ENCODE measurements at regions of chr18 and their contacts with region 1.

Region 1: DNA sequence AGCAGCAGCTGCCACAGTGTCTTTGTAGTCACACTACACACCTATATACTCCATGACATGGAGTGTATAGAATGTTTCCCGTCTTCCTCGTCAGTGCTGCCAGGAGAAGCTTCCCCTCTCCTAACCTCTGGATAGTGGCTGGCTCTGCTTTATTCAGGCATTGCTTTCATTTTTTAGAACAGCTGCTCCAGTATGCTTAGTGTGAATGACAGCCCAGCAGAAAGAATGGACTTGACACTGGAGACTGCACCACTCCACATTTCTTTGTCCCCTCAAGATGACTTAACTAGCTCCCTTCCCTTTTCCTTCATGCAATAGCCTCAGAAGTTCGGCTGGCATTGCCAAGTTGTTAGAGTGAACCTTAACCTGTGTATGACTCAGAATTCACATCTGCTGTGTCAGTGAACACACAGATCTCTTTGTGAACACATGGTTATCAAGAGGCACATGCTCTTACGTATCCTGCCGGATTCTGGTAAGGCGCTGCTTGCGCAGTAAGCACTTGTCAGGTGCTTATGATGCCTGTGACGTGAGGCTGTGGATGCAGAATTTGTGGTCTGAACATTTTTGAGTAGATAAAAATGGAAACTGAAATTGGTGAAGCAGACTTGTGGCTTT is 73.9 kb downstream of the NEDD4L start:
- DNase-seq: no peak
- H3K4me3 Mint-ChIP-seq: no peak overlapping the region
- H3K27ac Mint-ChIP-seq: no peak overlapping the region
- H3K4me1 Mint-ChIP-seq: peaks cover 10% of the 10 kb centered on the region
- H3K27me3 Mint-ChIP-seq: peaks cover 5% of the 10 kb centered on the region

Region 2: DNA sequence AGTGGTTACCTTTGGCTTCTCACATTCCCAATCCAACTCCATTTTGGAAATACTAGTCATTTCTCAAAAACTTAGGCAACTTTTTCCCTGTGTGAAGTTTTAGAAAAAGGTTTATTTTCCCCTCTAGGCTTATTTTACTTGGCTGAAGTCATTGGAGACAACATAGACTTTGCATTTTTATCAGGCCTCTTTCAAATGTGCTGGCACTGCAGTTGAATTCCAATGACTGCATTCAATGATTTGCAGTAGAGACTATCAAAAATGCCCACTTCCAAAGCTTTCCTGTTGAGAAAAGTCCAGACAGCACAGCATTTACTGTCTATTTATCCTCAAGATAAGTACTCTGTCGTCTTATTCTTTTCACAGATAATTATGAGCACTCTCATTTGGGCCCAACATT is 612.7 kb before region 1 on chr18:
- intact Hi-C with region 1: no loop called
- DNase-seq: no peak
- H3K4me3 Mint-ChIP-seq: no peak overlapping the region
- H3K27ac Mint-ChIP-seq: no peak overlapping the region
- H3K4me1 Mint-ChIP-seq: no peaks in the 10 kb centered on the region
- H3K27me3 Mint-ChIP-seq: peaks cover 6% of the 10 kb centered on the region

Region 3: DNA sequence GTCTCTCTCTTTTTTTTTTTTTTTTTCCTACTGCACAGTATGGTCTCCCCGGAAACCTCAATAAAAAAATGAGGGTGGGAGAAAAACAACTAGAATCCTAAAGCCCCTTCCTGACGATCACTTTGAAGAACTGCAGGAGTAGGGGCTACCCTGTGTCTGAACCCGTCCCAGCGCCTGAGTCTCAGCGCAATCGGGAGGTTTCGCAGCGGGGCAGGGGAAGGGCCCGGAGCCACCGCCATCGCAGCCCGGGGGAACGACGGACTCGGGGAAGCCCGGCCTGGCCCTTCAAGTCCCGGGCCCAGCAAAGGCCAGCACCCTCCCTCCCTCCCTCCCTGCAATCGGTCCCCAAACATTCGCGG is 496.7 kb before region 1 on chr18:
- intact Hi-C with region 1: loop called (anchors 1 kb)
- DNase-seq: no peak
- H3K4me3 Mint-ChIP-seq: peak overlapping the region; percentile 85
- H3K27ac Mint-ChIP-seq: peak overlapping the region; percentile 87
- H3K4me1 Mint-ChIP-seq: peaks cover 9% of the 10 kb centered on the region
- H3K27me3 Mint-ChIP-seq: no peaks in the 10 kb centered on the region

Region 4: DNA sequence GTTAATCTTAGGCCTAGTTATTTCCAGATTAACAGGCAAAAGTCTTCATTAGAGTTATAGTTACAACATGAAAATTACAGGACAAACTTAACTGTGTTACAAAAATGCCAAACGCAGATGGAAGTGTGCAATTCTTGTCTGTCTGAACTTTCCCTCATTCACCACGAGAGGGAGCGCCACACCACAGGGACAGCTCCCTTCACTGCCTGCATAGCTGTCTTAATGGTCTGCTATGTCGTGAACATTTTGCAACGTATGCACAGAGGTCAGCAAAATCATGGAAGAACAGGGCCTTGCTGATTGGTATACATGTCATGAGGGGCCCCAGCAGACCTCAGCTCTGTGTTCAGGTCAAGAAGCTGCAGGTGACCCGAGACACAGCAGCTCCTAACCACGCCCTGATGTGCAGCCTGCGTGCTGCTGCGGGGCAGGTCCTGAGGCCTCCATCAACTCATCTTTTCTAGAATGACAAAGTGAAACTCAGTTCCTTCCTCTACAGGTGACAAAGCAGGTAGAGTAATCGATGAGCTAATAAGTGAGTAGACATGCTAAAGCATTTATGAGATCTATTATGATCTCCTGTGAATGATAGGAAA is 236.0 kb before region 1 on chr18:
- intact Hi-C with region 1: loop called (anchors 1 kb)
- DNase-seq: peak; percentile 13
- H3K4me3 Mint-ChIP-seq: no peak overlapping the region
- H3K27ac Mint-ChIP-seq: no peak overlapping the region
- H3K4me1 Mint-ChIP-seq: no peaks in the 10 kb centered on the region
- H3K27me3 Mint-ChIP-seq: peaks cover 3% of the 10 kb centered on the region

Region 5: DNA sequence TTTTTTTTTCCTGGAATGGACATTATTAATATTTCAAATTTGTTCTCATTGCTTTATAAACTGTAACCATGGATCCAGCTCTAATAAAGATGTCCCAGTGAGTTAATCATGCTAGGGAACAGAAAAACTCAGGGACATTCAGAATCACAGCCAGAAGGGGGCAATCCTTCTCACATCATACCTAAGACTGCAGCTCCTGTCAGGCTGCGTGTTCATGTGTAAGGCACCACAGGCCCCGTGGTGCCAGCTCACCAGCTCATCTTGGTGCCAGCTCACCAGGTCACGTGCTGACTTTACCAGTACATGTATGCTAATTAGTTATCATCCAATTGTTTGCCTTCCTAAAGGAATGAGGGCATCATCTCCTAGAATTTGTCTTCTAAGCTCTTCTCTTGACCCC is 158.6 kb before region 1 on chr18:
- intact Hi-C with region 1: loop called (anchors 2 kb)
- DNase-seq: no peak
- H3K4me3 Mint-ChIP-seq: no peak overlapping the region
- H3K27ac Mint-ChIP-seq: no peak overlapping the region
- H3K4me1 Mint-ChIP-seq: no peaks in the 10 kb centered on the region
- H3K27me3 Mint-ChIP-seq: peaks cover 11% of the 10 kb centered on the region

Region 6: GRCh38 chr18:57970356-57971080 is 147.4 kb before region 1 on chr18:
- intact Hi-C with region 1: loop called (anchors 2 kb)
- DNase-seq: no peak
- H3K4me3 Mint-ChIP-seq: no peak overlapping the region
- H3K27ac Mint-ChIP-seq: no peak overlapping the region
- H3K4me1 Mint-ChIP-seq: peaks cover 5% of the 10 kb centered on the region
- H3K27me3 Mint-ChIP-seq: peaks cover 4% of the 10 kb centered on the region

Region 7: DNA sequence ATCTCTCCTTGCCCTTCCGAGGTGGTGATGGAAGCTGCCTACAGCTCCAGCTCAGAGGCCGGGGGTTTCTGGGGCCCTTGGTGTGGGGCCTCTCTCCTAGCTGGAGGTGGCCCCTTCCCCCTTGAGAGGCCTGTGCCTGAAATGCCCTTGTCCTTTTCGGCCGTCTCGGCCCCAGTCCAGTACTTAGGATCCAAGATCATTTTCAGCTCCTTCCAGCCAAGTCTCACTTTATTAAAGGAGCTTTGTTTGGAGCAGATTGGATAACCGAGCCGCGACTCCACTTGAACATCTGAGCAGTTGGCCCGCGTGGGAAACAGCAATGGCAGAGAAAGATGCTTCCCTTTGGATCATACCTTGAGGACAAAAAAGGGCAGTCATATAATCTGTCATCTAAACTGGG is 51.1 kb after region 1 on chr18:
- intact Hi-C with region 1: no loop called
- DNase-seq: no peak
- H3K4me3 Mint-ChIP-seq: no peak overlapping the region
- H3K27ac Mint-ChIP-seq: no peak overlapping the region
- H3K4me1 Mint-ChIP-seq: no peaks in the 10 kb centered on the region
- H3K27me3 Mint-ChIP-seq: peaks cover 6% of the 10 kb centered on the region